Thyroid gland (tissue), 4 donors: ENCODE measurements at regions of chr5 and their contacts with region 1.

Region 1: DNA sequence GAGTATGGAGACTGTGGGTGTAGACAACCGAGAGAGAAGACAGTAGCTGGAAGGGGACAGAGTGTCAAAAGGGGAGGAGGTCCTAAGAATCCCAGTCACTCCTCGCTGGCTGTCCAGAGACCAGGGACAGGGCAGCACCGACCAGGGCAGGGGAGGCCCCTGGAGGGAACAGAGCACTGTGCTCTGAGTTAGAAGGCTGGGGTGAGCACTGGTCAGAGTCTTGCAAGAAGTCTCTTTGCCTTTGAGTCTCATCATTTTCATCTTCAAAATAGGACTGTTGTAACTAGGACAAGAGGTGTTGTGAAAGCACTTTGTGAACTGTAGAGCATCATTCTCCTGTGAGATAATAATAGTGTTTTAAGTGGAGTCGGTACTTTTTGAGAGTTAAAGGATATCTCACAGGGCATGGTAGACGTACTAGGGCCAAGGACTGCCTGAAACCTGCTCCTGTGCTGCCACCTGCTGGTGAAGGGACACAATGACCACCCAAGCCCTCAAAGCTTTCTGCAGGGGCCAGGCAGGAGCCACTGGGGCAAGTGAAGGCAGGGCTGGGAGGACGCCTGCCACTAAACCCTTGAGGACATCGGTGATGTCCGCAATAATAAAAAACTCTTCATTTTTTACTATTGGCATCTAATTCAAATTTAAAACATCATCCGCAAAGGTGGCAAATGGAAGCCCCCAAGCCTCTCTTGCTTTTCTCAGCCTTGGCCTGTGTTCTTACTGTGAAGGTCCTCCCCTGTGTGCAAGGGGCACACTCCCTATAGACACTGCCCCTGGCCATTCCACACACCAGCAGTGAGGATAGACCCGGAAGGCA is 28.2 kb downstream of the SLC6A7 start:
- DNase-seq: peak; percentile 78 to 84
- H3K4me3 ChIP-seq: no peak overlapping the region
- H3K27ac ChIP-seq: no peak overlapping the region
- H3K4me1 ChIP-seq: peaks cover 0 to 4% of the 10 kb centered on the region in 2 donors
- H3K27me3 ChIP-seq: no peaks in the 10 kb centered on the region
- CTCF ChIP-seq: peak; percentile 67 to 91 (median 85)
- POLR2A ChIP-seq: no peak

Region 2: GRCh38 chr5:149153751-149154610 is 1064.1 kb before region 1 on chr5:
- intact Hi-C with region 1: no loop called
- DNase-seq: peak; percentile 66 to 78
- H3K4me3 ChIP-seq: no peak overlapping the region
- H3K27ac ChIP-seq: peak overlapping the region in 1 of 3 donors; percentile 35
- H3K4me1 ChIP-seq: peaks cover 5 to 27% of the 10 kb centered on the region in 2 donors
- H3K27me3 ChIP-seq: no peaks in the 10 kb centered on the region
- CTCF ChIP-seq: no peak
- POLR2A ChIP-seq: no peak

Region 3: GRCh38 chr5:149834246-149834855 is 383.7 kb before region 1 on chr5:
- intact Hi-C with region 1: loop called (anchors 10 kb)
- DNase-seq: peak; percentile 61 to 67
- H3K4me3 ChIP-seq: no peak overlapping the region
- H3K27ac ChIP-seq: no peak overlapping the region
- H3K4me1 ChIP-seq: no peaks in the 10 kb centered on the region
- H3K27me3 ChIP-seq: no peaks in the 10 kb centered on the region
- CTCF ChIP-seq: peak in 4 of 6 experiments; percentile 46 to 69 (median 67)
- POLR2A ChIP-seq: no peak

Region 4: GRCh38 chr5:149951135-149951749 is 266.8 kb before region 1 on chr5:
- intact Hi-C with region 1: no loop called
- DNase-seq: no peak
- H3K4me3 ChIP-seq: no peak overlapping the region
- H3K27ac ChIP-seq: no peak overlapping the region
- H3K4me1 ChIP-seq: no peaks in the 10 kb centered on the region
- H3K27me3 ChIP-seq: no peaks in the 10 kb centered on the region
- CTCF ChIP-seq: no peak
- POLR2A ChIP-seq: no peak

Region 5: GRCh38 chr5:150129813-150130492 is 88.1 kb before region 1 on chr5:
- intact Hi-C with region 1: loop called (anchors 5 kb)
- DNase-seq: peak; percentile 54 to 61
- H3K4me3 ChIP-seq: no peak overlapping the region
- H3K27ac ChIP-seq: no peak overlapping the region
- H3K4me1 ChIP-seq: peaks cover 0 to 6% of the 10 kb centered on the region in 2 donors
- H3K27me3 ChIP-seq: no peaks in the 10 kb centered on the region
- CTCF ChIP-seq: peak; percentile 42 to 86 (median 72)
- POLR2A ChIP-seq: no peak

Region 6: GRCh38 chr5:150161242-150162141 is 56.6 kb before region 1 on chr5:
- intact Hi-C with region 1: loop called (anchors 2 kb)
- DNase-seq: peak; percentile 66 to 74
- H3K4me3 ChIP-seq: no peak overlapping the region
- H3K27ac ChIP-seq: peak overlapping the region in 1 of 3 donors; percentile 73
- H3K4me1 ChIP-seq: peaks cover 0 to 6% of the 10 kb centered on the region in 2 donors
- H3K27me3 ChIP-seq: no peaks in the 10 kb centered on the region
- CTCF ChIP-seq: peak; percentile 75 to 96 (median 83)
- POLR2A ChIP-seq: no peak

Region 7: DNA sequence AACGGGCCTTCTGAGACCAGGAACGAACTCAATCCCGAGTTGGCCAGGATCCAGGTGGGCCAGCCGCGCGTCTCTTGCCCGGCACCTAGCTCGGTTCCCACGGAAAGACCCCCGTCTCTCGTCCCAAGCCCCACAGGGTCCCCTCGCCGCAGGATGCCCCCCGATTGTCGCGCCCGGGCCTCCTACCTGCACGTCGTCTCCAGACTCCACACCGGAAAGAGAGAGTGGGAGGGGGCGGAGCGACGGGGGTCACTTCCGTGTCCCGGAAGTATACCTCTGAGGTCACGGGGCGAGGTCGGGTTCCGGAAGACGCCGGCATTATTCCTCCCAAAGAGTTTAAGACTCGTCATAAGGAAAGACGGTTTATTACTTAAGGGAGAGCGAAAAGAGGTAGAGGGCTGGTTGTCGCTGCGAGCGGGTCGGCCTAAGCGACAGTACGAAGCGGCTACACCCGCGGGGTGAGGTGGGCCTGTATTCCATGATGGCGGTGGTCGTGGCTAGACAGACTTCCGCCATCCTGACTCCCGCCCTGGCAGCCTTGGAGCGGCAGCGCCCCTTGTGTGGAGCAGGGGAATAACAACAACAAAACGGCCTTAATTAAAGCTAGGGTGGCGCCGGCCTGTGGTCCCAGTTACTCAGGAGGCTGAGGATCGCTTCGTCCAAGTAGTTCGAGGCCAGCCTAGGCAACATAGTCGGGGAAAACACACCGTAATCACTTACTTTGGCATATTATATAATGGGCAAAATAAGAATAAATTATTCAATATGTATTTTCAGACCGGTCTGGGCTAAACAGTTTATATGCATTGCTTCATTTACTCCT is 231.6 kb after region 1 on chr5 and contains the start of gene RPS14:
- intact Hi-C with region 1: no loop called
- DNase-seq: peak; percentile 94 to 95
- H3K4me3 ChIP-seq: peak within 1 kb of the TSS; percentile 43 to 69 (median 49)
- H3K27ac ChIP-seq: peak within 1 kb of the TSS; percentile 95 to 99 (median 96)
- H3K4me1 ChIP-seq: peaks cover 9 to 13% of the 10 kb centered on the region in 2 donors
- H3K27me3 ChIP-seq: no peaks in the 10 kb centered on the region
- CTCF ChIP-seq: peak; percentile 65 to 96 (median 92)
- POLR2A ChIP-seq: peak in 1 of 2 donors; percentile 87
- total RNA-seq, gene RPS14: 2,017 to 5,540 (median 2,786) TPM